ENCODE measurements at regions of chr18 and their contacts with region 1.

Region 1: DNA sequence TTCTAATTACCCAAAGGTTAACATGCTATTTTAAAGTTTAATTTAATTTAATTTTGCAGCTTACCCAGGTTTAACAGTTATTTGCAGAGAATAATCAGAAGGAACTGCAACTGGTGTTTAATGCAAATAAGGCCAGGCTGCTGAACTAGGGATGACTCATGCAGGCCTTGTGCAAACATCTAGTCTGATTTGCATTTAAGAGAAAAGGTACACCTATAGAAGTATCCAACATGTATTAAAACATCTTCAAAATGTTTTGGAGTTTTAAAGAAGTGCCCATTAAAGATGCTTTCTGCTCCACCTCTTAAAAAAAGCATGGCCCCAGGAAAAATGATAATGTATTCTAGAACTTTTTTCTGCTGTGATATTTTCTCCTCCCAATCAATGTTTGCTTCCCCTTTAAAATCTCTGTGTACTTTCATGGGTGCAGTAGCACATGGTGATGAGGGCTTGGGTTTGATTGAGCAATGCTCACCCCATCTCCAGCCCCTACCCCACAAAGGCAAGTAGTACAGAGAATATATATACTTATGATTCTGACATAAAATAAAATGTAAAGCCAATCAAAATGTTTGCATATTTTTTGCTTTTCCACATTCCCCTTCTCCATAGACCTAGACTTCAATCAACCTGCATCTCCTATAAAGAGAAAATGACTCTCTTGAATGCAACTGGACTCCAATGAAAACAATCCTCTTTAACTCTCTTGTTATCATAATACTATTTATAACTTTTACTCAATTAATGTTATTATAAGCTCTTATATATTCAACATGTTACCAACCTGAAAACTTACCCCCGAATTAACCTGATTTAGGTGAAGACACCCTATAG is 54.1 kb downstream of the ATP8B1 start:
- DNase-seq: peak; percentile 50 to 77 (median 70)
- H3K4me3 ChIP-seq: peak overlapping the region in 1 of 3 experiments; percentile 58
- H3K4me3 Mint-ChIP-seq: no peak overlapping the region
- H3K27ac ChIP-seq: peak overlapping the region in 1 of 2 donors; percentile 71
- H3K27ac Mint-ChIP-seq: peak overlapping the region; percentile 44 to 87 (median 79)
- H3K4me1 ChIP-seq: peaks cover 26 to 31% of the 10 kb centered on the region in 2 donors
- H3K4me1 Mint-ChIP-seq: peaks cover 25% of the 10 kb centered on the region
- H3K27me3 ChIP-seq: no peaks in the 10 kb centered on the region
- H3K27me3 Mint-ChIP-seq: no peaks in the 10 kb centered on the region
- CTCF ChIP-seq: no peak

Region 2: DNA sequence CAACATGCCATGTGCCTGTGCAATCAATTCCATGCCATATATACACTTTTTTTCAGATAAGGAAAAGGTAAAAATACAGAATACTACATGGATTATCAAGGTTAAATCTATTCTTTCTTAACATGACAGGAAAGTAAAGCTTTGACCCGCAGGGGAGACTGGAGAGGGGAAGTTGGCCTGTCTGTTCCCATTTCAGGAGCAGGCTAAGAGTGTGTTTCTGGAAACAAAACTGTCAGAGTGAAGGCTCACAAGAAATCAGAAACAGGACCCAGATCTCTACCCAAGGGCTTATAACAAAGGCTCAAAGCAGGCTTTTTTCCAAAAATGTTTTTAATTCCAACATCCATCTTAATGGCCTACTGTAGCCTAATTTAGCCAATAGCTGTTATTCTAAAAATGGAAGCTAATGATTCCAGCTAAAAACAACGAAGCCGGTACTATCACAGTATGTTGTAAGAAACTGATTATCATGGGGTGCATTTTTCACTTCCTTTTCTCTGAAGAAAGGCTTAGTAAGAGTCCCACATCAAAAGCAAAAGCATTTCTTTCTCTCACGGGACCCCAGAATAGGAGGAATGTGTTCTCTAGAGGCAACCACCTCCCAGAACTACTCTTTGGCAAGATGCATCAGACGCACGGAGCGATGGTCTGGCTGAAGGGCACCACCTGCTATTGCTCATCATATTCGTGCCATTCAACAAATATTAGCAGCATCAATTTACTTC is 203.9 kb before region 1 on chr18:
- intact Hi-C with region 1: no loop called
- DNase-seq: peak; percentile 57 to 71 (median 62)
- H3K4me3 ChIP-seq: peak overlapping the region in 2 of 3 experiments; percentile 8 to 64
- H3K4me3 Mint-ChIP-seq: peak overlapping the region; percentile 53 to 79
- H3K27ac ChIP-seq: peak overlapping the region; percentile 39 to 77
- H3K27ac Mint-ChIP-seq: peak overlapping the region; percentile 65 to 86 (median 82)
- H3K4me1 ChIP-seq: peaks cover 20 to 21% of the 10 kb centered on the region in 2 donors
- H3K4me1 Mint-ChIP-seq: peaks cover 19% of the 10 kb centered on the region
- H3K27me3 ChIP-seq: no peaks in the 10 kb centered on the region
- H3K27me3 Mint-ChIP-seq: peaks cover 0 to 2% (median 0%) of the 10 kb centered on the region in 3 donors
- CTCF ChIP-seq: no peak

Region 3: GRCh38 chr18:57768537-57769326 is 19.7 kb after region 1 on chr18:
- intact Hi-C with region 1: loop called in 1 of 2 experiments (anchors 2 kb)
- DNase-seq: no peak
- H3K4me3 ChIP-seq: peak overlapping the region in 1 of 3 experiments; percentile 7
- H3K4me3 Mint-ChIP-seq: no peak overlapping the region
- H3K27ac ChIP-seq: no peak overlapping the region
- H3K27ac Mint-ChIP-seq: peak overlapping the region in 1 of 7 donors; percentile 25
- H3K4me1 ChIP-seq: peaks cover 39 to 49% of the 10 kb centered on the region in 2 donors
- H3K4me1 Mint-ChIP-seq: peaks cover 50% of the 10 kb centered on the region
- H3K27me3 ChIP-seq: no peaks in the 10 kb centered on the region
- H3K27me3 Mint-ChIP-seq: peaks cover 0 to 3% (median 3%) of the 10 kb centered on the region in 3 donors
- CTCF ChIP-seq: no peak

Measured in CD14-positive monocyte (primary cell).